ENCODE measurements at regions of chr6 and their contacts with region 1.

Region 1: DNA sequence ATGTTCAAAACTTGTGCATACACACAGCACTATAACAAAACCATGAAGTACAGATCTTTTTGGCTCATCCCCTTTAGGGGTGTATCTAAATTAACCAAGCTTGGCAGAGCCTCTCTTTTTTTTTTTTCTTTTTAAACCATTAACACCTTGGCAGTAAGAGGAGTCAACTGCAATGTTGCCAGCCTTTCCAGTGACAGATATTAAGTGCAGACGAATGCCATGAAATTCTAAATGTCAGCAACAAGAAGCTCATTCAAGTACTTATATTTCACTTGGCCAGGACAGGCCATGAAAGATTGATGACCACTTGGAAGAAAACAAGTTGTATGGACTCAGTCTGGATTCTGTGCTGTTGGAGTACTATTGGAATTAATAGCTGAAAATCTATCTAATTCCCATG is 49.8 kb downstream of the SLC17A5 start:
- DNase-seq: no peak
- ATAC-seq: no peak
- H3K4me3 ChIP-seq: no peak overlapping the region
- H3K27ac ChIP-seq: peak overlapping the region; percentile 31; the same call in 1 of the 2 replicates
- H3K4me1 ChIP-seq: peaks cover 11% of the 10 kb centered on the region
- H3K27me3 ChIP-seq: no peaks in the 10 kb centered on the region
- CTCF ChIP-seq: no peak

Region 2: GRCh38 chr6:73152966-73153757 is 450.9 kb before region 1 on chr6:
- CTCF ChIA-PET with region 1: no interaction called
- POLR2A ChIA-PET with region 1: no interaction called
- in situ Hi-C with region 1: no loop called
- intact Hi-C with region 1: no loop called
- DNase-seq: no peak
- ATAC-seq: no peak
- H3K4me3 ChIP-seq: no peak overlapping the region
- H3K27ac ChIP-seq: no peak overlapping the region
- H3K4me1 ChIP-seq: no peaks in the 10 kb centered on the region
- H3K27me3 ChIP-seq: no peaks in the 10 kb centered on the region
- CTCF ChIP-seq: no peak

Region 3: DNA sequence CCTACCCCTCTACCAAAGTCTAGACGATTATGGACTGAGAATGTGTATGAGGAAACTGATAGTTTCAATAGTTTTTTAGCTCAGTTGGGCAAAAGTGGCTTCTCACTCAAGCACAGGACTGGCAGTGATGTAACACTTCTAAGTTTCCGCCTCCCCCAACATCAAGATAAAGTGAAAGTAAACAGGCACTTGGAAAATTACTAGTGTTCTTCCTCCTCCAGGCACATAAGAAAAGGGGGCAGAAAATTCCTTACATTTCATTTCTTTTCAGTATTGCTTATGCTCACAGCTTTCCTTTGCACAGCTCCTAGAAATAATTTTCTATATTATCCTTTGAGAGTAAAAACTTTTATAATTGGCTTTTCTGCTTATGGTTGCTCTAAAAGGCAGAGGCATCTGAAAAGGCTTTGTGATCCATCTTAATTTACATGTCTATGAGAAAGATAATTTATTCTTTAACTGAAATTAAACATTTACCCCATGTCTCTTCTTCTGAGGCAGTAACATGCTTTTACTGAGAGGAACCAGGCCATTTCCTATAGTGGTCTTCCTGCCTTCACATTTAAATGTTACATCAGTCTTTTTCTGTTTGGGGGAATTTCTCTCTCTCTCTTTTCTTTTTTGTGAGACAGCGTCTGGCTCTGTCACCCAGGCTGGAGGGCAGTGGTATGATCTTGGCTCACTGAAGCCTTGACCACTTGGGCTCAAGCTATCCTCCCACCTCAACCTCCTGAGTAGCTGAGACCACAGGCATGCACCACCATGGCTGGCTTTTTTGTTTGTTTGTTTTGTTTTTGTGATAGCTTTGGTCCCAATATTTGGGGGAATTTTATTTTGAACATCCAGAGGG is 18.2 kb before region 1 on chr6:
- CTCF ChIA-PET with region 1: no interaction called
- POLR2A ChIA-PET with region 1: interaction called, 10 read pairs
- in situ Hi-C with region 1: no loop called
- intact Hi-C with region 1: no loop called
- DNase-seq: peak; percentile 68
- ATAC-seq: peak; percentile 88
- H3K4me3 ChIP-seq: peak overlapping the region; percentile 18 to 19
- H3K27ac ChIP-seq: peak overlapping the region; percentile 100
- H3K4me1 ChIP-seq: peaks cover 36% of the 10 kb centered on the region
- H3K27me3 ChIP-seq: no peaks in the 10 kb centered on the region
- CTCF ChIP-seq: no peak

Region 4: DNA sequence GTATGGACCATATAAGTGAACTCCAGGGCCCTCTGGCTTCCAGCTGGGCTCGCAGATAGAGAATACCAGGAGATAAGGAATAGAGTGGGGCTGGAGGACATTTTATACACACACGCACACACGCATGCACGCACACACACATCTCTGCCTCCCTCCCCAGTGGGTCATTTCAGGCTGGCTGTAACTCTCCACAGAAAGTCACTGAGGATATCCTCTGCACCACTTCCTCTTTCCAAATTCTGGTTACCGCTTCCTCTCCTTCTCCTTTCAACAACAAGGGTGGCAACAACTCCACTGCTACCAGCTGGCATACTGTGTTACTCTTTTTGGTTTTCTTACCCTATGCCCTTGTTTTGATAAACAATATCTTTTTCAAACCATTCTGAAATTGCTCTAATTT is 1321.7 kb after region 1 on chr6:
- CTCF ChIA-PET with region 1: no interaction called
- POLR2A ChIA-PET with region 1: no interaction called
- in situ Hi-C with region 1: no loop called
- intact Hi-C with region 1: no loop called
- DNase-seq: no peak
- ATAC-seq: no peak
- H3K4me3 ChIP-seq: no peak overlapping the region
- H3K27ac ChIP-seq: no peak overlapping the region
- H3K4me1 ChIP-seq: no peaks in the 10 kb centered on the region
- H3K27me3 ChIP-seq: no peaks in the 10 kb centered on the region
- CTCF ChIP-seq: no peak